ENCODE measurements at regions of chr1 and their contacts with region 1.

Region 1: DNA sequence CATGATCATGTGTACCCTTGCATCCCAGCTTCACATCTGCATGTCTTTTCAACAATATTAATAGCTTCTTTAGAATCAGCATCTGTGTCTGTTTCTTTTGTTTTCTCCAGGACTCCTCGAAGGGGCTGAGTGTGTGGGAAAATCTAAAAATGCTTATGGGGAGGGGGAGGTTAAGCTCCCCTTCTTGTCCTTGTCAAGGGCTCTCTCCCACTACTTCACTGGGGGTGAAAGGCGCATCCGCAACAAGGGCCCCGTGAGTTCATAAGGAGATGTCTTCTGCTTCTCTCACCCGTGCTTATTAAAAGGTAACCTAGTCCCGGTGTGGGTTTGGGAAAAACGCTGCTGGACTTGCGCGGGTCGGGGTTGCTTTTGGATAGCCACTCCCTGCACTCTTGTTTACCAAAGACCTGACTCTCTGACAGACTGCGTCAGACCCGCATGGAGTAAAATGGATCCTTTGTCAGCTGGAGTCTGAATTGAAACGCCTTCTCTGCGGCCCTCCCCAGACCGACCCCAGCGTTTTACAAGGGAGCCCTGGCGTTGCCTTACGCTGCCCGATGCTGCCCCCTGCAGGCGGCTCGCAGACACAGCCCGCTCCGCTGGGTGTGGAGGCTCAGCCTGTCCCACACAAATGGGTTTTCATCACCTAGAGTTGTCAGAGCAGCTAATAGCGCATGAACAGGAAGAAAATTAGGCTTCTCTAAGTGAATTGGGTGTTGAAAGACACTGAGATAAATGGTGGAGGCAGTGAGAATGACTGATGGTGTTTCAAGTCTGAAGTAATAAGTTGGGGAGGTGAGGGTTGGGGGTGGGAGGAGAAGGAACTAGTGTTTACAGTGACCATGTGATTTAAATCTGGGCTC is 53.8 kb downstream of the IER5 start:
- DNase-seq: peak; percentile 97

Region 2: DNA sequence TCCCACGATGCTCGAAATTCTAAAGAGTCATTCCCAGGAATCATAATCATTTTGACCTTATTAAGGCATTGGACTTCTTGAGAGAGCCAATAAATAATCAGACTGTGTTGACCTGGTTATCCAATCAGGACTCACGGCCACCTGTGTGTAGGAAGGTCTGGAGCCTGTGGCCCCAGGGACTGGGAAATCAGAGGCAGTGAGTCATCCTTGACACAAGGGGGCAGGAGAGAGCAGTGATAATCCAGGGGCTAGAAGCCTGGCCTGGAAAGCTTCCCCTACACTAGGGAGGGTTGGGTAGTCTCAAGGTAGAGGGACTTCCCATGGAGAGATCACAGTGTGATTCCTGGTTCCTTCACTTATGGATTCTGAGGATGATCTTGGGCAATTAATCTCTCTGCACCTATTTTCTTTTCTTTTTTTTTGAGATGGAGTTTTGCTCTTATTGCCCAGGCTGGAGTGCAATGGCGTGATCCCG is 103.9 kb before region 1 on chr1:
- CTCF ChIA-PET with region 1: interaction called, 15 read pairs
- POLR2A ChIA-PET with region 1: interaction called, 3 read pairs
- DNase-seq: peak; percentile 82

Region 3: DNA sequence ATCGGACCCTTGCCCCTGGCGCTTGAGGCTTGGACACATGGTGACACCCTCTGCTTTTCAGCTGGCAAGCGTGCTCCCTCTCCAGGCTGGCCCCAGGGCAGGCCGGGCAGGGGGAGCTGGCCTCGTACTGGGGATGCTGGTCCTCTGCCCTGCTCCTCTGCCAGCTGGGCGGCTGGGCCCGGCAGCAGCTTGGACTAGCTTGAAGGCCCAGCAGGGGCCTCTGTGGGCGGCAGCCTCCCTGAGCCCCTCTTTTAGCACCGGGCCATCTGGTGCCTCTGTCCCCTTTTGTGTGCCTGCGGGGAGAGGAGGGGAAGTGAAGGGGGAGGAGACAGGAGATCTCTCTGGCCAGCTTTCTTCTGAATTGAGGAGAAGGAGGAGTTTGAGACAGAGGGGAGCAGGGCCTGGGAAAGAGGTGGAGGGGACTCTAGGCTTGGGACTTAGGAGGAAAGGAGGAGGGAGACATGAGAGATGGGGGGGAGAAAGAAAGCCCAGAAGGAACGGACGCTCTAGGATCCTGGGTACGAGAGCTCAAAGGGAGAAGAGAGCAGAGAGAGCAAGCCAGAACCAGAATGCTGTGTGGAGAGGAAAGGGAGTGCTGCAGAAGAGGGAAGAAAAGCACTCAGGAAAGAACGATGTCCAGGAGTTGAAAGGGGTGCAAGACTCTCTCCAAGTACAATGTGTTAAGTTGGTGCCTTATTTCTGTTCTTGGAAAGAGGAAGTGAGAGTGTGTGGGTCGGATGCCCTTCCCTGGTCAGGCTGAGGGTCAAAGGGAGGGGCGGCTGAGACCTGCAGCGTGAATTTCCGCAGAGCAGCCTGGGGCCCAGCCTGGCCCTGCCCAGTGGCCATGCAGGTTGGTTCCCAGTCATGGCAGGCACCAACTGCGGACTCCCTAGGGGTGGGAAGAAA is 13.5 kb before region 1 on chr1:
- CTCF ChIA-PET with region 1: interaction called, 13 read pairs
- POLR2A ChIA-PET with region 1: no interaction called
- DNase-seq: no peak

Region 4: DNA sequence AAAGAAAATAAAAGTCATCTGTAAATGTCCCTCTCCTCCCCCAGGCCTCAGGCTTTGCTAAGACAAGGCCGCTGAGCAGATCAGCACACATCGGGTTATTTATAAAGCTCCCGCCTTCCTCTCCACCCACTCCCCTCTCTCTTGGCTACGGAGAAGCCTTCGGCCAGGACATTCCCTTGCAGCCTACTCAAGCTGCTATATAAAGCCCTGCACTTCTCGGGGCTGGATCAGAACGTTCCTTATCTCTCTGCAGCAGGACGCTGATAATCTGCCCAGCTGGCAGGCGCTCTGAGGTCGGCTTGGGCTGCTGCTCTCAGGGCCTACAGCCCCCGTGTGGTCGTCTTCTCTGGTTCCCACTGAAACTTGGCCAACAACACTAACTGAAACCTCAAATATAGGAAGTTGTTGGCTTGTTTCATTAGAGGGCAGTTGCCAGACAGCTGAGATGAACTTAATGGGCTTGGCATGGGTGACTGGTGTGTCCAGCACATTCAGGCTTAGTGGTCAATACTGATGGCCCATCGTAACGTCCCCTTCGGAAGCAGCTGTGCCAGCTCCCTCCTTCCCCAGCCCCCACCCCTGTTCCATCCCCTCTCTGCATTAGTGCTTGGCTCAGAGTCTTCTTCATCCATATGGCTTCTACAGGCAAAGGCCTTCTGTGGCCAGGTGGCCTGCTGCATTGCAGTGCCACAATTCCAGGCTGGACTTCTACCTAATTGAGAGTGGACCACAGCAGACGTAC is 10.7 kb after region 1 on chr1:
- CTCF ChIA-PET with region 1: interaction called, 18 read pairs
- POLR2A ChIA-PET with region 1: interaction called, 3 read pairs
- DNase-seq: peak; percentile 56

Region 5: DNA sequence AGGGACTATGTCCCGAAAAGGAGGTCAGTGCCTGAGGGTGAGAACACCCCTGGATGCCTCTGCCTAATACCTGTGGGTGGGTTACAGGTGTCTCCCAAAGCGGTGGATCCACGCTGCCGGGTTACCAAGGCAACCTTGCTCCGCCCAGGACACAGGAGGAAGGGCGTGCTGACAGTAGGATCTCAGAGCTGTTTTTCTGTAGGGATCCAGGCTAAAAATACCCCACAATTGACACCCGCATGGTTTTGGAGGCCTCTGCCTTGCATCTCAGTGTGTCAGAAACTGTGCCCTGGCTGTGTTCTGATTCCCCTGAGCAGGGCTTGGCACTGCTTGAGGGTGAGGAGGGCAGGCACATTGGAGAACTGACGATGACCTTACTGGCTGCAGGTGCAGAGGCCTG is 64.2 kb after region 1 on chr1:
- CTCF ChIA-PET with region 1: no interaction called
- POLR2A ChIA-PET with region 1: no interaction called
- DNase-seq: no peak

Region 6: GRCh38 chr1:181288752-181289151 is 146.4 kb after region 1 on chr1:
- CTCF ChIA-PET with region 1: no interaction called
- POLR2A ChIA-PET with region 1: no interaction called
- DNase-seq: no peak